Endothelial cell of umbilical vein (primary cell): ENCODE measurements at regions of chr19 and their contacts with region 1.

Region 1: GRCh38 chr19:41016488-41017071 is 25.5 kb downstream of the CYP2B6 start:
- DNase-seq: no peak
- H3K4me3 ChIP-seq: no peak overlapping the region
- H3K27ac ChIP-seq: no peak overlapping the region
- H3K4me1 ChIP-seq: no peaks in the 10 kb centered on the region
- H3K27me3 ChIP-seq: peaks cover 2 to 6% of the 10 kb centered on the region in 2 experiments
- CTCF ChIP-seq: no peak
- POLR2A ChIP-seq: no peak

Region 2: DNA sequence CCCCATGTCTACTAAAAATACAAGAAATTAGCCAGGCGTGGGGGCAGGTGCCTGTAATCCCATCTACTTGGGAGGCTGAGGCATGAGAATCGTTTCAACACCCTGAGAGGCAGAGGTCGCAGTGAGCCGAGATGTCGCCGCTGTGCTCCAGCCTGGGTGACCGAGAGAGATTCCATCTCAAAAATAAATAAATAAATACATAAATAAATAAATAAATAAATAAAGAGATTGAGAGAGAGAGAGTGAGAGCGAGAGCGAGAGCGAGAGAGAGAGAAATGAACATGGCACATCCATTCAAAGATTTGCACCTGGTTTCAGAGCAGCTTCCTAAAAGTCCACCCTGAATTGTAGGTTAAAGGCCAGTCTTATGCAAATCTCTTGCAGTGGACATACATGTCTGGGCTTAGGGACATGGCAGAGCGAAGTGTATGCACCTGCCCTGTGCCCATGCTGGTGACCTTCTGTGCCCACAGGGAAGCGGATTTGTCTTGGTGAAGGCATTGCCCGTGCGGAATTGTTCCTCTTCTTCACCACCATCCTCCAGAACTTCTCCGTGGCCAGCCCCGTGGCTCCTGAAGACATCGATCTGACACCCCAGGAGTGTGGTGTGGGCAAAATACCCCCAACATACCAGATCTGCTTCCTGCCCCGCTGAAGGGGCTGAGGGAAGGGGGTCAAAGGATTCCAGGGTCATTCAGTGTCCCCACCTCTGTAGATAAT is 67.8 kb before region 1 on chr19:
- CTCF ChIA-PET with region 1: interaction called, 4 read pairs
- POLR2A ChIA-PET with region 1: no interaction called
- dilution Hi-C with region 1: no loop called
- intact Hi-C with region 1: loop called (anchors 2 kb)
- DNase-seq: no peak
- H3K4me3 ChIP-seq: no peak overlapping the region
- H3K27ac ChIP-seq: no peak overlapping the region
- H3K4me1 ChIP-seq: no peaks in the 10 kb centered on the region
- H3K27me3 ChIP-seq: no peaks in the 10 kb centered on the region
- CTCF ChIP-seq: no peak
- POLR2A ChIP-seq: no peak

Region 3: DNA sequence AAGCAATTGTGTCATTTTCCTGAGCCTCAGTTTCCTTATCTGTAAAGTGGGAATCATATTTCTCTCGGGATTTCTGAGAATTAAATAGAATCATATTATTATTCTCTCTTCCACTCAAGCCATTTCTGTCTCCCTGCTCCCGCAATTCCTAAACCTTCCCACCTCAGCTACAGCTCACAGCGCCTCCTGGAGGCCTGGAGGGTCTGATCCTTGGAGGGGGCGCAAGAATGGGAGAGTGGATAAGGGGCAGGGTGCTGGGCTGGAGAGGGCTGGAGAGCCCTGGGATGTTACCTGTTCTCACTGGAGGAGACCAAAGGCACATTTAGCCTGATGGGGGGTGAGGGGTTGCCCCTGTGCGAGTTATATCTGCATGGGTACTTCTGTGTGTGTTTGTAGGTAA is 145.3 kb after region 1 on chr19:
- CTCF ChIA-PET with region 1: no interaction called
- POLR2A ChIA-PET with region 1: no interaction called
- dilution Hi-C with region 1: no loop called
- intact Hi-C with region 1: no loop called
- DNase-seq: no peak
- H3K4me3 ChIP-seq: no peak overlapping the region
- H3K27ac ChIP-seq: no peak overlapping the region
- H3K4me1 ChIP-seq: no peaks in the 10 kb centered on the region
- H3K27me3 ChIP-seq: no peaks in the 10 kb centered on the region
- CTCF ChIP-seq: peak; percentile 7 to 15
- POLR2A ChIP-seq: no peak